Dendritic cell treated with granulocyte-macrophage colony-stimulating factor and Interleukin-4, amounts not matched to agents 40 ng/mL and 50 ng/mL, for 4 days (primary cell): ENCODE measurements at regions of chr2 and their contacts with region 1.

Region 1: GRCh38 chr2:74876081-74876886 is 42.4 kb downstream of the HK2 start:
- H3K4me3 Mint-ChIP-seq: no peak overlapping the region
- H3K27ac Mint-ChIP-seq: peak overlapping the region; percentile 63
- H3K4me1 Mint-ChIP-seq: peaks cover 51% of the 10 kb centered on the region
- H3K27me3 Mint-ChIP-seq: no peaks in the 10 kb centered on the region

Region 2: GRCh38 chr2:74690571-74690970 is 185.7 kb before region 1 on chr2:
- intact Hi-C with region 1: loop called (anchors 1 kb)
- H3K4me3 Mint-ChIP-seq: no peak overlapping the region
- H3K27ac Mint-ChIP-seq: no peak overlapping the region
- H3K4me1 Mint-ChIP-seq: peaks cover 10% of the 10 kb centered on the region
- H3K27me3 Mint-ChIP-seq: peaks cover 8% of the 10 kb centered on the region

Region 3: DNA sequence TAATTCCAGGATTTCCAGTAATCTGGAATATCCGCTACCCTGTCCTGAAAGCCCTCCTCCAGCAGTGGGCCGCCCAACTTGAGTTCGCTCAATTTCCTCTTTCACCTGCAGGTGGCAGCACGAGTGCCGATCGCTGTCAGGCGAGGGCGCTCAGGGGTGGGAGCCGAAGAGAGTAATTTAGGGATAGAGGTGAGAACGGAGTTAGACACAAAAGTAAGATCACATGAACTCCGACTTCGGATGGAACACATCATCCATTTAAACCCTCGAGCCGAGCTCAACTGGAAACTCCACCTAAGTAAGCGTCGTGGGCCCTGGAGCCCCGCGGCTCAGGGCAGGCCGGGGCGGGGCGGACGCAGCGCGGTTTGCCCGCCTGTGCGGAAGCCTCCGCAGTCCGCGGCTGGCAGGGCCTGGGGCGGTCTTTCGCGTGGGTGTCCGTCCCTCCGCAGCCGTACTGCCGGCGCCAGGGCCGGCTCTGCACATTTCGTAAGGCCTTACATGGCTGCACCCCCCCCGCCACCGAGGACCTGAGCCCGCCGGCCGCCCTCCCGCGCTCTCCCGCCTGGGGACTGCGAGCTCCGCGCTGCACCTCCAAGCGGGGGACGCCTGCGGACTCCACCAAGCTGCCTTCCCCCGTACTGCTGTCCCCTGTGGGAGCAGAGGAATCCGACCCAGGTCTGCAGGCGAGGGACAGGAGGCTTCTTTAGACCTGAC is 161.0 kb before region 1 on chr2:
- intact Hi-C with region 1: loop called (anchors 1 kb)
- H3K4me3 Mint-ChIP-seq: peak overlapping the region; percentile 75
- H3K27ac Mint-ChIP-seq: no peak overlapping the region
- H3K4me1 Mint-ChIP-seq: peaks cover 5% of the 10 kb centered on the region
- H3K27me3 Mint-ChIP-seq: peaks cover 7% of the 10 kb centered on the region

Region 4: GRCh38 chr2:74834792-74835752 is 41.2 kb before region 1 on chr2:
- intact Hi-C with region 1: loop called (anchors 2 kb)
- H3K4me3 Mint-ChIP-seq: peak overlapping the region; percentile 91
- H3K27ac Mint-ChIP-seq: peak overlapping the region; percentile 89
- H3K4me1 Mint-ChIP-seq: peaks cover 69% of the 10 kb centered on the region
- H3K27me3 Mint-ChIP-seq: no peaks in the 10 kb centered on the region